Heart left ventricle (tissue), 16 donors: ENCODE measurements at regions of chr14 and their contacts with region 1.

Region 1: DNA sequence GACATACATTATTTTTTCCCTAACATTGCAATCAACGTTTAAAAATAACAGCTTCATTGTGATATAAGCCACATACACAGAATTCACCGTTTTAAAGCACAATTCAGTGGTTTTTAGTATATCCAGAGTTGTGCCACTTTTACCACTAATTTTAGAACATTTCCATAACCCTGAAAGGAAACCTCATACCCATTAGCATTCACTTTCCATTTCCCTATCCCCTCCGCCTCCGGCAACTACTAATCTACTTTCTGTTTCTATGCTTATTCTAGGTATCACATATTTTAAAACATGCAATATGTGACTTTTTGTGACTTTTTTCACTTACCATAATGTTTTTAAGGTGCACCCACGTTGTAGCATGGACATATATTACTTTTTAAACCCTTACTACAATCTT is 55.6 kb upstream of the ISM2 start:
- DNase-seq: no peak
- ATAC-seq: peak in 1 of 4 donors; percentile 50
- H3K4me3 ChIP-seq: peak overlapping the region in 1 of 12 donors; percentile 23
- H3K27ac ChIP-seq: peak overlapping the region in 8 of 12 donors; percentile 6 to 83 (median 23)
- H3K4me1 ChIP-seq: peaks cover 0 to 39% (median 2%) of the 10 kb centered on the region in 12 donors
- H3K27me3 ChIP-seq: no peaks in the 10 kb centered on the region
- CTCF ChIP-seq: no peak
- POLR2A ChIP-seq: no peak

Region 2: GRCh38 chr14:77151918-77152588 is 402.2 kb before region 1 on chr14:
- intact Hi-C with region 1: loop called in 4 of 10 experiments (anchors 5 to 10 kb)
- DNase-seq: no peak
- ATAC-seq: peak in 1 of 4 donors; percentile 27
- H3K4me3 ChIP-seq: no peak overlapping the region
- H3K27ac ChIP-seq: no peak overlapping the region
- H3K4me1 ChIP-seq: peaks cover 0 to 19% (median 0%) of the 10 kb centered on the region in 12 donors
- H3K27me3 ChIP-seq: peaks cover 0 to 18% (median 8%) of the 10 kb centered on the region in 9 donors
- CTCF ChIP-seq: peak in 6 of 12 donors; percentile 13 to 35 (median 22)
- POLR2A ChIP-seq: no peak

Region 3: GRCh38 chr14:77290741-77291140 is 263.5 kb before region 1 on chr14:
- intact Hi-C with region 1: loop called in 1 of 10 experiments (anchors 10 kb)
- DNase-seq: no peak
- ATAC-seq: no peak
- H3K4me3 ChIP-seq: no peak overlapping the region
- H3K27ac ChIP-seq: no peak overlapping the region
- H3K4me1 ChIP-seq: no peaks in the 10 kb centered on the region
- H3K27me3 ChIP-seq: no peaks in the 10 kb centered on the region
- CTCF ChIP-seq: no peak
- POLR2A ChIP-seq: no peak

Region 4: GRCh38 chr14:77301103-77301502 is 253.1 kb before region 1 on chr14:
- intact Hi-C with region 1: loop called in 8 of 10 experiments (anchors 2 to 10 kb)
- DNase-seq: peak in 4 of 5 donors; percentile 57 to 82 (median 68)
- ATAC-seq: peak; percentile 37 to 73 (median 72)
- H3K4me3 ChIP-seq: no peak overlapping the region
- H3K27ac ChIP-seq: no peak overlapping the region
- H3K4me1 ChIP-seq: peaks cover 0 to 17% (median 0%) of the 10 kb centered on the region in 12 donors
- H3K27me3 ChIP-seq: no peaks in the 10 kb centered on the region
- CTCF ChIP-seq: peak; percentile 41 to 71 (median 58)
- POLR2A ChIP-seq: no peak

Region 5: DNA sequence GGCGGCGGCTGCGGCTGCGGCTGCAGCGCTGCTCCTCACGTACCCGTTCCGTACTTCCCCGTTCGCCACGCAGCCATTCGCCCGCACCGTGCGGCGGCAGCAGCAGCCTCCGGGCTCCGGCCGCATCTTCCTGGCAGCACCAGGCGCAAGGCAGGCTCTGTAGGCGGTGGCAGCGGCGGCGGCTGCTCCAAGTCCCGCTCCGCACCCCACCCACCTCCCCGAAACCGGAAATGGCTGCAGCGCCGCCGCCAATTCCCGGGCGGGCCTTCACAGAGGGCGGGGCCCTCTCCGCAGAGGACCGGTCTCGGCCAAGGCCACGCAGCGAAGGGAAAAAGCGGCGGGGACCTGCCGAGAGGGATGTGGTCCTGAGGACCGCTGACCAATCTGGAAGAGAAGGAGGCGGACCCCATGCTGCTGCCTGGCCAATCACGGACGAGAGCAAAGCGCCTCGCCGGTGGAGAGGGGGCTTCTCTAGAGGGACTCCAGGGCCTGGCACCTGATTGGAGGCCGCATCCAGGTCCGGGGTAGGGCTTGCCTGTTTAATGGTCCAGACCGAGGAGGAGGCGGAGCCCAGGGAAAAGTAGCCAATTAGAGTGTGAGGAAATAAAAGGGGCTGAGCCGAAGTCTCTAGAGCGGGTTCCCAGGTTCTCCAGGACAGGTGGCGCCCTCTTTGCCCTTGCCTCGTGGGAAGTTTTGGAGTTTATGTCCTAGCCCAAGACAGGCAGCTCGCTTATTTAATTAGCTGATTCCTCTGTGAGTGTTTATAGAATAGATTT is 62.4 kb after region 1 on chr14 and contains the start of gene SPTLC2:
- intact Hi-C with region 1: loop called in 3 of 10 experiments (anchors 5 to 10 kb)
- DNase-seq: peak; percentile 99 to 100 (median 99)
- ATAC-seq: peak; percentile 99 to 100 (median 99)
- H3K4me3 ChIP-seq: peak within 1 kb of the TSS; percentile 78 to 94 (median 90)
- H3K27ac ChIP-seq: peak within 1 kb of the TSS; percentile 76 to 91 (median 86)
- H3K4me1 ChIP-seq: peaks cover 0 to 48% (median 13%) of the 10 kb centered on the region in 12 donors
- H3K27me3 ChIP-seq: no peaks in the 10 kb centered on the region
- CTCF ChIP-seq: peak in 4 of 12 donors; percentile 9 to 34 (median 24)
- POLR2A ChIP-seq: peak in 1 of 2 donors; percentile 82
- total RNA-seq, gene SPTLC2: 8.2 to 25.2 (median 11.2) TPM

Region 6: DNA sequence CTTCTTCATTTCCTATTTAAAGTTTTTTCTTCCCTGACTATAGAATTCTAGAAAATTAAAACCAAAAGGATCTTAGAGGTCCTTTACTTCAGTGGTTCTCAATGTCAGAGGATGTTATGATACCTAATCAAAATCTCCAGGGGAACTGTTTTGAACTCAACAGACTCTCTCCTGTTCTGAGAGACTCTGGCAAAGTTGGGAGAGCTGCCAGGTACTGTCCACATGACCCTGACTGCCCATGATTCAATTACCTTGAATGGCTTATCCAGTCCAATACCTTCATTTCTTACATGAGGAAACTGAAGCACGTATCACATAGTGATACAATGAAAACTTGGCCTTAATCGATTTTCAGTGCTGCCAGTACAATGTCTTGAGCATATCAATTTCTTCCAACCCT is 137.1 kb after region 1 on chr14:
- intact Hi-C with region 1: no loop called
- DNase-seq: peak in 4 of 5 donors; percentile 39 to 77 (median 62)
- ATAC-seq: peak; percentile 88 to 95 (median 92)
- H3K4me3 ChIP-seq: no peak overlapping the region
- H3K27ac ChIP-seq: peak overlapping the region in 7 of 12 donors; percentile 10 to 72 (median 50)
- H3K4me1 ChIP-seq: peaks cover 0 to 4% (median 0%) of the 10 kb centered on the region in 12 donors
- H3K27me3 ChIP-seq: no peaks in the 10 kb centered on the region
- CTCF ChIP-seq: no peak
- POLR2A ChIP-seq: no peak